Activated naive CD4-positive, alpha-beta T cell treated with anti-CD3 and anti-CD28 coated beads for 36 hours (primary cell): ENCODE measurements at regions of chrX and their contacts with region 1.

Region 1: DNA sequence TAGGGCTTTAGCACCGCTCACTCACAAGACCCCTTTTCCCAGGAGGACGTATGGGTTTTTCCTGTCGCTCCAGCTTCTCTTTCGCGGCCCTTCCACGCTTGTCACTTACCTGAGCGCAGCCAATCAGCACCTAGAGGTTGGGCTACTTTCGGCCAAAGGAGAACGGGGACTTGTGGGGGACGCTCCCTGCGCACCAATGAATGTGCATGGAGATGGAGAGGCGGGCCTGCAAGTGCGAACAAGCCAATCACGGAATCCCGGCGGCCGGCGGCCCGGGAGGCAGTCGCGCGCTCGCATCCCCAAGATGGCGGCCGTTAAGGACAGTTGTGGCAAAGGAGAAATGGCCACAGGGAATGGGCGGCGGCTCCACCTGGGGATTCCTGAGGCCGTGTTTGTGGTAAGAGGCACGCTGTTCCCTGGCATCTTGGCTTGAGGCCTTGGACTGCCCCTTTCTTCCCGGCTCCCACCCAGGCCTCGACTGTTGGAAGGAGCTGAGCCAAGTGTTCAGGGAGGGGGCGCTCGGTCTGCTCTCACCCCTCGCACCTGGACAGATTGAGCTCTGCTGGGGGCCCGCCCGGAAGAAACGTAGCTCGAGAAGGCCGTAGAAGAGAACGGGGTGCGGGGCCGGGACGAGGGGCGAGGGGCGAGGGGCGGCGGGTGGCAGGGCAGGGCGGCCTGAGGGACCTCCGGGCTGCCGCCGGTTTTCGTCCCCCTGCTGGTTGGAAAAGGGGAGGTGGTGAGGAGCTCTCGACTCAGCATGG is at the start of gene VBP1:
- DNase-seq: peak; percentile 93
- H3K4me3 Mint-ChIP-seq: peak within 1 kb of the TSS; percentile 96
- H3K27ac Mint-ChIP-seq: peak within 1 kb of the TSS; percentile 88
- H3K4me1 Mint-ChIP-seq: peaks cover 15% of the 10 kb centered on the region
- H3K27me3 Mint-ChIP-seq: no peaks in the 10 kb centered on the region
- total RNA-seq, gene VBP1: 106 to 110 TPM

Region 2: GRCh38 chrX:154397819-154398724 is 818.3 kb before region 1 on chrX and contains the start of gene RPL10:
- CTCF ChIA-PET with region 1: no interaction called
- intact Hi-C with region 1: no loop called
- DNase-seq: peak; percentile 91
- H3K4me3 Mint-ChIP-seq: peak within 1 kb of the TSS; percentile 94
- H3K27ac Mint-ChIP-seq: peak within 1 kb of the TSS; percentile 100
- H3K4me1 Mint-ChIP-seq: peaks cover 11% of the 10 kb centered on the region
- H3K27me3 Mint-ChIP-seq: no peaks in the 10 kb centered on the region
- total RNA-seq, gene RPL10: 3,331 to 3,466 TPM

Region 3: GRCh38 chrX:154799554-154800348 is 416.6 kb before region 1 on chrX:
- CTCF ChIA-PET with region 1: no interaction called
- intact Hi-C with region 1: loop called (anchors 1 kb)
- DNase-seq: no peak
- H3K4me3 Mint-ChIP-seq: no peak overlapping the region
- H3K27ac Mint-ChIP-seq: peak overlapping the region; percentile 88
- H3K4me1 Mint-ChIP-seq: peaks cover 61% of the 10 kb centered on the region
- H3K27me3 Mint-ChIP-seq: no peaks in the 10 kb centered on the region